ENCODE measurements at regions of chr12 and their contacts with region 1.

Region 1: GRCh38 chr12:89461649-89462612 is 62.7 kb downstream of the GALNT4 start:
- DNase-seq: no peak
- ATAC-seq: peak; percentile 86 to 92
- H3K4me3 ChIP-seq: peak overlapping the region; percentile 34
- H3K27ac ChIP-seq: peak overlapping the region; percentile 78
- H3K4me1 ChIP-seq: no peaks in the 10 kb centered on the region
- H3K27me3 ChIP-seq: no peaks in the 10 kb centered on the region

Region 2: GRCh38 chr12:89051065-89051677 is 410.8 kb before region 1 on chr12:
- intact Hi-C with region 1: loop called (anchors 2 to 5 kb)
- DNase-seq: no peak
- ATAC-seq: peak; percentile 64 to 81
- H3K4me3 ChIP-seq: no peak overlapping the region
- H3K27ac ChIP-seq: no peak overlapping the region
- H3K4me1 ChIP-seq: no peaks in the 10 kb centered on the region
- H3K27me3 ChIP-seq: no peaks in the 10 kb centered on the region

Region 3: GRCh38 chr12:89162704-89163261 is 299.1 kb before region 1 on chr12:
- intact Hi-C with region 1: loop called in 1 of 4 experiments (anchors 10 kb)
- DNase-seq: peak; percentile 37 to 61 (median 40)
- ATAC-seq: peak; percentile 86 to 89
- H3K4me3 ChIP-seq: no peak overlapping the region
- H3K27ac ChIP-seq: no peak overlapping the region
- H3K4me1 ChIP-seq: peaks cover 3% of the 10 kb centered on the region
- H3K27me3 ChIP-seq: no peaks in the 10 kb centered on the region